ENCODE measurements at regions of chr12 and their contacts with region 1.

Region 1: DNA sequence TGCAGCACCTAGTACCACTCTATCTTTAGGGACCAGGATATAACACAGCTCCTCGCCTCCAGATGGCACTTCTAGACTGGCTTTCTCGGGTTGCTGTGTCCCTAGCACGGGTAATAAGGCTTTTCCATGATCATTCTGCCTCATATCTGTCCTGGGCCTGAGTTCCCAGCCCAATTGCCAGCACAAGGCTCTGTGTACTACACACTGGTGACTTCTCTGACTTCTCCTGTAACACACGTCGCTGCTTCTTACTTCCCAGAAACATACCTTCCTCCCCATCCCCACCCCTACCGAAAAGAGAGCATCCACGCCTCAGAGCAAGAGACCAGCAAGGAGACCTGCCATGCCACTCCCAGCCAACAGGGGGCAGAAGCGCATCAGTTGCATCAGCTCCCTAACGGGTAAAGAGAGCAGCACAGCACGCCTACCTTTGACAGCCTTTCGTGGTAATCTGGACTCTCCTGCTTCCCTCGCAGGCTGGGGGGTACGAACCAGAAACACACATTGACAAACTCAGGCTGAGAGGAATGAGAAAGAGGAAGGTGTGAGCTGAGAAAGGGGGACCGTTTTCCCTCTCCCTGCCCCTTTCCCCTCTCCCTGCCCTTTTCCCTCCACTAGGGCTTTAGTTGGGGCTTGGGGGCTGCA is 21.2 kb upstream of the ZNF740 start:
- DNase-seq: peak; percentile 94
- H3K4me3 Mint-ChIP-seq: no peak overlapping the region
- H3K27ac Mint-ChIP-seq: peak overlapping the region; percentile 15
- H3K4me1 Mint-ChIP-seq: peaks cover 10% of the 10 kb centered on the region
- H3K27me3 Mint-ChIP-seq: no peaks in the 10 kb centered on the region

Region 2: DNA sequence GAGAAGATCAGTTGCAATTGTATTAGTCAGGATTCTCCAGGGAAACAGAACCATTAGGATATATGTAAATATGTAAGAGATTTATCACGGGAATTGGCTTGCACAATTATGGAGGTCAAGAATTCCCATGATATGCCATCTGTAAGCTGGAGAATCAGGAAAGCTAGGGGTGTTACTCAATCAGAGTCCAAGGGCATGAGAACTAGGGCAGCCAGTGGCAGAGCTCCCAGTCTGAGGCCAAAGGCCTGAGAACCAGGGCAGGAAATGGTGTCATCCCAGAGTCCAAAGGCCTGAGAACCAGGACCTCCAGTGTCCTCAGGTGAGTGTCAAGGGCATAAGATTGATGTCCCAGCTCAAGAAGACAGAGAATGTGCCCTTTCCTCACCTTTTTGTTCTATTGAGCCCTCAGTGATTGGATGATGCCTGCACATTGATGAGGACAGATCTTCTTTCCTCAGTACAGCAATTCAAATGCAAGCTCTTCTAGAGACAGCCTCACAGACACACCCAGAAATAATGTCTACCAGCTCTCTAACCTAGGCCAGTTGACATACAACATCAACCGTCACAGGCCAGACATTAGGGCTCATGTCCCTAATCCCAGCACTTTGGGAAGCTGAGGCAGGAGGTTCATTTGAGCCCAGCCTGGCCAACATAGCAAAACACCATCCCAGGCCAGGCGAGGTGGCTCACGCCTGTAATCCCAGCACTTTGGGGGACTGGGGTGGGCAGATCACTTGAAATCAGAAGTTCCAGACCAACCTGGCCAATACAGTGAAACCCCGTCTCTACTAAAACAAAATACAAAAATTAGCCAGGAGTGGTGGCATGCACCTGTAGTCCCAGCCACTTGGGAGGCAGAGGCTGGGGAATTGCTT is 13.7 kb before region 1 on chr12:
- CTCF ChIA-PET with region 1: no interaction called
- DNase-seq: no peak
- H3K4me3 Mint-ChIP-seq: no peak overlapping the region
- H3K27ac Mint-ChIP-seq: no peak overlapping the region
- H3K4me1 Mint-ChIP-seq: no peaks in the 10 kb centered on the region
- H3K27me3 Mint-ChIP-seq: peaks cover 9% of the 10 kb centered on the region

Region 3: DNA sequence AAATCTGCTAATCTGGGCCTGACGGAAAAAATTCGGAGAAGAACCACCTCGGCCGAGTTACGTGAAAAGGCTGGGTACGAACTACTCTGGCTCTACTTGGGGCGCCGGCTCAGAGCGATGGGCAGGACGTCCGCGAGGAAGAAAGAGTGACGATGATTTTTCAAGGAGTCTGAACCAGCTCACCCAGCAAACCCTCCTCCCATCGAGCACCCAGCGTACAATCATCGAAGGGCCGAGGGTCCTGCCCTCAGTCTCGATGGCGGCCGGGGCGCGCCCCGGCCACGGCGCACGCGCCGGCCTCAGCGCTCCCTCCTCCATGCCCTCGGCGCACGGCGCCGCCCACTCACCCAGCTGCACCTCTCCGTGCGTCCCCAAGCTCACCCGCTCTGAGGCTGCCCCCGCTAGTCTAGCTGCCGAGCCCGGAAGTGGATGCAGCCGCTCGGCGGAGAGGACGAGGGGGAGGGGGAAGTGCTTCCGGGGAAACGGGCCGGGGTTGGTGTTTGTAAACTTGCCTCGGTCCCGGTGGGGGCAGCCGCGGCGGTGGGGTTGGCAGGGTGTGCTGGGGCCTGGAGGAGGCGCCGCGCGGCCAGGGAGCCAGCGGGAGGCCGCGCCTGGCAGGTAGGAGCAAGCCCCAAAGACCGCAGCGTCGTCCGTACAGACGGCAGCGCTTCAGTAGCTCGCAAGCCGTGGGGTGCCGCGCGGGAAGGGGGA is 21.1 kb after region 1 on chr12 and contains the starts of genes CSAD and ZNF740:
- CTCF ChIA-PET with region 1: interaction called, 18 read pairs
- DNase-seq: peak; percentile 99
- H3K4me3 Mint-ChIP-seq: peak within 1 kb of the TSS; percentile 88
- H3K27ac Mint-ChIP-seq: peak within 1 kb of the TSS; percentile 99
- H3K4me1 Mint-ChIP-seq: peaks cover 59% of the 10 kb centered on the region
- H3K27me3 Mint-ChIP-seq: no peaks in the 10 kb centered on the region

Region 4: GRCh38 chr12:53200458-53201176 is 41.3 kb after region 1 on chr12:
- CTCF ChIA-PET with region 1: interaction called, 51 read pairs
- DNase-seq: peak; percentile 55
- H3K4me3 Mint-ChIP-seq: peak overlapping the region; percentile 48
- H3K27ac Mint-ChIP-seq: peak overlapping the region; percentile 89
- H3K4me1 Mint-ChIP-seq: peaks cover 88% of the 10 kb centered on the region
- H3K27me3 Mint-ChIP-seq: no peaks in the 10 kb centered on the region

Region 5: DNA sequence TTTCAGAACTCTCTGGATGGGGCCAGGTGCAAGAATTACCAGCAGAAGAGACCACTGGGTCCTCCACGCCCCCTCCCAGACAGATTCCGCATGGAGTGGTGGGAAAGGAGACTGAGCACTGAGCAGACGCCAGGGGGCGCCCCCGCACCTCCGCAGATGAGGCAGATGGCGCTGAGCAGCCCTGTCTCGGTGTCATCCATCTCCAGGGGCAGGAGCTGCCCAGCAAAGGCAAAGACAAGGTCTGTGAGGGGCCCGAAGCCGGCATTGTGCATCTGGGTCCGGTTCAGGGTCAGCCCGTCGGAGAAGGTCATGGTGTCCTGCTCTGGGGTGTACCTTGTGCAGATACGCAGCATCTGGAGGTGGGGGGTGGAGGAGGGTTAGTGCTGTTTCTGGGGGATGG is 54.0 kb after region 1 on chr12:
- CTCF ChIA-PET with region 1: interaction called, 69 read pairs
- DNase-seq: peak; percentile 89
- H3K4me3 Mint-ChIP-seq: no peak overlapping the region
- H3K27ac Mint-ChIP-seq: peak overlapping the region; percentile 50
- H3K4me1 Mint-ChIP-seq: peaks cover 84% of the 10 kb centered on the region
- H3K27me3 Mint-ChIP-seq: no peaks in the 10 kb centered on the region

Region 6: GRCh38 chr12:53267999-53268647 is 108.8 kb after region 1 on chr12 and contains the start of gene ESPL1:
- CTCF ChIA-PET with region 1: interaction called, 22 read pairs
- DNase-seq: peak; percentile 87
- H3K4me3 Mint-ChIP-seq: peak within 1 kb of the TSS; percentile 99
- H3K27ac Mint-ChIP-seq: peak within 1 kb of the TSS; percentile 93
- H3K4me1 Mint-ChIP-seq: peaks cover 50% of the 10 kb centered on the region
- H3K27me3 Mint-ChIP-seq: no peaks in the 10 kb centered on the region

Region 7: GRCh38 chr12:53321074-53321814 is 161.9 kb after region 1 on chr12 and contains the start of gene AAAS:
- CTCF ChIA-PET with region 1: interaction called, 28 read pairs
- DNase-seq: peak; percentile 98
- H3K4me3 Mint-ChIP-seq: peak within 1 kb of the TSS; percentile 89
- H3K27ac Mint-ChIP-seq: peak within 1 kb of the TSS; percentile 92
- H3K4me1 Mint-ChIP-seq: peaks cover 51% of the 10 kb centered on the region
- H3K27me3 Mint-ChIP-seq: peaks cover 6% of the 10 kb centered on the region